GM18951 (cell line): ENCODE measurements at regions of chr11 and their contacts with region 1.

Region 1: GRCh38 chr11:94525546-94526324 is 13.5 kb downstream of the C11orf97 start:
- POLR2A ChIP-seq: no peak

Region 2: GRCh38 chr11:94602430-94603372 is 77.0 kb after region 1 on chr11:
- in situ Hi-C with region 1: loop called (anchors 5 kb)
- POLR2A ChIP-seq: no peak